Aorta (tissue), 5 donors: ENCODE measurements at regions of chr2 and their contacts with region 1.

Region 1: DNA sequence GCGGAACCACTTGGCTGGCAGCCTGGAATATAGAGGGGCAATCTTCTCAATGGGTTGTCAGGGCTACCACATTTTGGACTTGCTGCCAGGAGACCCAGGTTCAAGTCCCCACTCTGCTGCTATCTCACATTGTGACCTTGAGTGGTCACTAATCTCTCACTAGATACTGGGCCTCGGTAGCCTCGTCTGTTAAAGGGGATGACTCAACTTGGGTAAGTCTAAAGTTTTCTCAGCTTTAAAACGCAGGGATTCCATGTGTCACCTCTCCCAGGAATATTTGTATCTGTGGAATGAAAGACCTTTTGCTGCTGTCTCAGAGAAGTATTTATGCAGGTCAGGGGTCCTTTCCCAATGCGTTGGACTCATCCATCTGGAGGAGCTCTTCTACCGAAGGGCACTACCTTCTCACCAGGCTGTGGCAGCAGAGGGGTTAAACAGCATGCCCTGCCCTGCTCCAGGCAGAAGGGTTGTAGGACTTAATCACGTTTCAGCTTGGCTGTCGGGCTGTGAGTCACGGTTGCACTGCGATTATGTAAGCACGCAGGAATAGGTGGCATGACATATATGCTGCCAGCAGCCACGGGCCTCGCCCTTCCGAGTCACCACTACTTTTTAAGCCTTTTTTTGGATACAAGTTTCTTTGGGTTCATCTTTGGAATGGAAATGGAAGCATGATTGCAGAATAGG is 86.5 kb downstream of the SEMA4F start:
- DNase-seq: peak; percentile 85 to 88
- ATAC-seq: peak; percentile 85
- H3K4me3 ChIP-seq: no peak overlapping the region
- H3K27ac ChIP-seq: peak overlapping the region in 1 of 2 donors; percentile 97
- H3K4me1 ChIP-seq: peaks cover 0 to 3% of the 10 kb centered on the region in 2 donors
- H3K27me3 ChIP-seq: no peaks in the 10 kb centered on the region

Region 2: GRCh38 chr2:74619651-74620297 is 120.8 kb before region 1 on chr2:
- intact Hi-C with region 1: no loop called
- DNase-seq: no peak
- ATAC-seq: no peak
- H3K4me3 ChIP-seq: no peak overlapping the region
- H3K27ac ChIP-seq: no peak overlapping the region
- H3K4me1 ChIP-seq: no peaks in the 10 kb centered on the region
- H3K27me3 ChIP-seq: peaks cover 0 to 2% of the 10 kb centered on the region in 2 donors

Region 3: DNA sequence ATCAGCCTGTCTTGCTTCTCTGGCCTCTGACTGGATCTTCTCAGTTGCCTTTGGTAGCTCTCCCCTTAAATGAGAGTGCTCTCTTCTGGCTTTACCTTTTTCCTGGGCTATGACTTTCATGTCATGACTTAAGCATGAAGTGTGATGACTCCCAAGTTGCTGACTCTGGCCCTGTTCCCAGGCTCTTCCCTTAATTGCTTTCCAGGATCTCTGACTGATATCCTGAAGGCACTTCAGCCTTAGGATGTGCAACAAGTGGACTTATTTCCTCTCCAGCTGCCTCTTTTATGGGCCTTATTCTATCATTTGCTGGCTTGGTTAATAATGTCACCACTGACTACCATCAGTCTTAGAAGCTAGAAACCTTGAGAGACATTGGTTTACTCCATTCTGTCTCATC is 69.1 kb before region 1 on chr2:
- intact Hi-C with region 1: no loop called
- DNase-seq: no peak
- ATAC-seq: no peak
- H3K4me3 ChIP-seq: no peak overlapping the region
- H3K27ac ChIP-seq: no peak overlapping the region
- H3K4me1 ChIP-seq: no peaks in the 10 kb centered on the region
- H3K27me3 ChIP-seq: no peaks in the 10 kb centered on the region

Region 4: DNA sequence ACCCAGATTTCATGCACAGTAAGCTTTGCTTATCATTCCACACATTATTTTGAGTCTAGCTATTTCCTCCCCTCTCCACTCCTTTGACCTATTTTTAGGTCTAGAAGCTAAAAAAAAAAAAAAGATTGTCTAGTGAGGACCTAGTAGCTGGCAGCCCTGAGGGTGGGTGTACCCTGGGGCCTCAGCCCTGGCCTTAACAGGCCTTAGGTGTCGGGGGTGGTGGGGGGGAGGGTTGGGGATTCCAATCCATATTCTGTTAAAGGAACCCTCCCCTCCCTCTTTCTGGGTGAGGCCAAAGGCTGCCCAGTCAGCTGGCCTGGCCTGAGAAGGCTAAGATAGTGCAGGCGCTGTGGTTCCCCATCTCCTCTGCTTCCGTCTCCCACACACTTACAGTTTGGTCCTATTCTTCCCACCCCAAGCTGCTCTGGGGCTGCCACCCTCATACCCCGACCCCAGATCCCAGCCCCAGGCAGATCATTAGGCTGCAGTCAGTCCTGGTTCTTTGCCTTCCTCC is 27.9 kb after region 1 on chr2:
- intact Hi-C with region 1: loop called in 1 of 2 experiments (anchors 2 kb)
- DNase-seq: peak; percentile 58 to 82
- ATAC-seq: peak; percentile 63
- H3K4me3 ChIP-seq: no peak overlapping the region
- H3K27ac ChIP-seq: peak overlapping the region; percentile 54 to 96
- H3K4me1 ChIP-seq: peaks cover 0 to 2% of the 10 kb centered on the region in 2 donors
- H3K27me3 ChIP-seq: no peaks in the 10 kb centered on the region

Region 5: DNA sequence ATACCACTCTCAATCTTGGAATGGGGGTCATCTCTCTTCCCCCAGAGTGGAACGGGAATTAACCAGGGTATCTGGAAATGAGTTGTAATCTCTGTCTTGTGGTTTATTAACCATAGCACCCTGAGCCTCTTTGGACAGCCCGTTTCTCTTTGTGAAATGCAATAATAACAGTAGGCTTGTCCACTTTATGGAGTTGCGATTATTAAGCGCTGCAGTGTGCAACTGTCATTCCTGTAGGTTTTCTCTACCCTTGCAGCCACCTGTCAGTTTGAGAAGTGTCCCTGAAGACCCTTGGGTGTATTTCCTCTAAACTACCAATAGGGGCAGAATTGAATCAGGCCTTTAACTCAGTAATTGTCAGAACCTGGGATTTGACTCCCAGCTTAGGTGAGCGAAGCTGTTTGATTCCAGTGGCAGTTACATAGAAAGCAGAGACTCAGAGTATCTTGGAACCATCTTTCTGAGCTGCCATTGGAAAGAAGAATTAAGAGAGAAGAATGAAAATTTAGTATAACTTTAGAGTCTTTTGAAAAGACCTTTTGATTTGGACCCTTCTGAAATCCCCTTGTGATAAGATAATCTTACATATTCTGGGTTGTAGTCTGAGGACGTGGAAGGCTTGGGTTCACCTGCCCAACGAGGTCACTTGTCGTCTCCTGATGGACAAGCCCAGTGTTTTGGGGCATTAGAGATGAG is 95.9 kb after region 1 on chr2:
- intact Hi-C with region 1: no loop called
- DNase-seq: no peak
- ATAC-seq: no peak
- H3K4me3 ChIP-seq: no peak overlapping the region
- H3K27ac ChIP-seq: peak overlapping the region in 1 of 2 donors; percentile 5
- H3K4me1 ChIP-seq: peaks cover 2 to 5% of the 10 kb centered on the region in 2 donors
- H3K27me3 ChIP-seq: no peaks in the 10 kb centered on the region

Region 6: DNA sequence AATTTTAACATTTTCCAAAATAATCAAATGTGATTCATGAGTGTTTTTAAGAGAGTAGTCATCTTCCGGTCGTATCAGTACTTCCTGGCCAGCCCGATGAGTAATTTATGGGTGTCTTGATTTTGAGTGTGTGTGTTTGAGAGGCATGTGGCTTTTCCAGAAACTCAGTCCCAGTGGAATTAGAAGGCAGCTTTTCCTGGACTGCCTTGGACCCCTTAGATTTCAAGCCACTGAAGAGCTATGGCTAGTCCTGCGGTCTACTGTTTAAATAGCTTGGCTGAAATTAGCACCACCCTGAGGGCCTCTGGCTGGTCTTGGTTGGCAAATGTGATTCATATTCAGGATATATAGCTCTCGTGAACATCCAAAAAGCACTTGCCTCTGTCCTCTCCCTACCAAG is 152.8 kb after region 1 on chr2:
- intact Hi-C with region 1: loop called in 1 of 2 experiments (anchors 1 kb)
- DNase-seq: no peak
- ATAC-seq: peak; percentile 22
- H3K4me3 ChIP-seq: no peak overlapping the region
- H3K27ac ChIP-seq: peak overlapping the region in 1 of 2 donors; percentile 56
- H3K4me1 ChIP-seq: no peaks in the 10 kb centered on the region
- H3K27me3 ChIP-seq: no peaks in the 10 kb centered on the region

Region 7: DNA sequence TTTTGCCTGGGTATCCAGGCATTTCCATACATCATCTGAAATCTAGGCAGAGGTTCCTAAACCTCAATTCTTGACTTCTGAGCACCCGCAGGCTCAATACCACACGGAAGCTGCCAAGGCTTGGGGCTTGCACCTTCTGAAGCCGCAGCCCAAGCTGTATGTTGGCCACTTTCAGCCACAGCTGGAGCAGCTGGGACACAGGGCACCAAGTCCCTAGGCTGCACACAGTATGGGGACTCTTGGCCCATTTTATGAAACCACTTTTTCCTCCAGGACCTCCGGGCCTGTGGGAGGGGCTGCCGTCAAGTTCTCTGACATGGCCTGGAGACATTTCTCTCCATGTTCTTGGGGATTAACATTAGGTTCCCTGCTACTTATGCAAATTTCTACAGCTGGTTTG is 165.9 kb after region 1 on chr2:
- intact Hi-C with region 1: no loop called
- DNase-seq: no peak
- ATAC-seq: no peak
- H3K4me3 ChIP-seq: no peak overlapping the region
- H3K27ac ChIP-seq: no peak overlapping the region
- H3K4me1 ChIP-seq: no peaks in the 10 kb centered on the region
- H3K27me3 ChIP-seq: no peaks in the 10 kb centered on the region